AG04449 (cell line): ENCODE measurements at regions of chr2 and their contacts with region 1.

Region 1: GRCh38 chr2:54176577-54176976 is 61.2 kb downstream of the ACYP2 start:
- DNase-seq: no peak
- H3K4me3 ChIP-seq: no peak overlapping the region
- CTCF ChIP-seq: peak; percentile 66

Region 2: GRCh38 chr2:54161660-54162424 is 14.7 kb before region 1 on chr2:
- CTCF ChIA-PET with region 1: interaction called, 17 read pairs
- POLR2A ChIA-PET with region 1: no interaction called
- DNase-seq: no peak
- H3K4me3 ChIP-seq: no peak overlapping the region
- CTCF ChIP-seq: no peak

Region 3: GRCh38 chr2:54187331-54187730 is 10.8 kb after region 1 on chr2:
- CTCF ChIA-PET with region 1: interaction called, 13 read pairs
- POLR2A ChIA-PET with region 1: no interaction called
- DNase-seq: no peak
- H3K4me3 ChIP-seq: no peak overlapping the region
- CTCF ChIP-seq: no peak